HepG2 (cell line): ENCODE measurements at regions of chr16 and their contacts with region 1.

Region 1: GRCh38 chr16:11977376-11978041 is 975 bp downstream of the SNX29 start:
- DNase-seq: no peak
- ATAC-seq: peak; percentile 4
- H3K4me3 ChIP-seq: peak overlapping the region; percentile 75 to 91 (median 87)
- H3K27ac ChIP-seq: no peak overlapping the region
- H3K4me1 ChIP-seq: peaks cover 43% of the 10 kb centered on the region
- H3K27me3 ChIP-seq: no peaks in the 10 kb centered on the region; a peak in 1 of 5 replicates
- CTCF ChIP-seq: no peak
- EP300 ChIP-seq: no peak
- POLR2A ChIP-seq: no peak
- RAD21 ChIP-seq: no peak

Region 2: GRCh38 chr16:11915644-11916523 is 61.6 kb before region 1 on chr16 and contains the start of gene GSPT1:
- CTCF ChIA-PET with region 1: no interaction called
- POLR2A ChIA-PET with region 1: interaction called, 25 read pairs
- in situ Hi-C with region 1: no loop called
- intact Hi-C with region 1: loop called (anchors 10 kb)
- DNase-seq: peak; percentile 99
- ATAC-seq: peak; percentile 92
- H3K4me3 ChIP-seq: peak within 1 kb of the TSS; percentile 74 to 98 (median 97)
- H3K27ac ChIP-seq: peak within 1 kb of the TSS; percentile 94
- H3K4me1 ChIP-seq: peaks cover 48% of the 10 kb centered on the region
- H3K27me3 ChIP-seq: no peaks in the 10 kb centered on the region; a peak in 1 of 5 replicates
- CTCF ChIP-seq: peak; percentile 52
- EP300 ChIP-seq: peak; percentile 8 to 53; a peak in 1 of 4 replicates
- POLR2A ChIP-seq: peak; percentile 80 to 97
- RAD21 ChIP-seq: peak; percentile 52
- total RNA-seq, gene GSPT1: 316 and 449 TPM in 2 replicates

Region 3: GRCh38 chr16:11964761-11965551 is 12.6 kb before region 1 on chr16 and contains the start of gene TNFRSF17:
- CTCF ChIA-PET with region 1: no interaction called
- POLR2A ChIA-PET with region 1: interaction called, 17 read pairs
- in situ Hi-C with region 1: no loop called
- intact Hi-C with region 1: no loop called
- DNase-seq: no peak
- ATAC-seq: 0 out of 3 replicates have a peak, but pooled peaks have one; percentile 23
- H3K4me3 ChIP-seq: no peak within 1 kb of the TSS; a peak in 1 of 6 replicates
- H3K27ac ChIP-seq: no peak within 1 kb of the TSS
- H3K4me1 ChIP-seq: peaks cover 34% of the 10 kb centered on the region
- H3K27me3 ChIP-seq: peaks cover 4 to 19% of the 10 kb centered on the region in 2 experiments; a peak in 4 of 5 replicates
- CTCF ChIP-seq: no peak
- EP300 ChIP-seq: no peak
- POLR2A ChIP-seq: no peak
- RAD21 ChIP-seq: no peak
- total RNA-seq, gene TNFRSF17: not detected in 2 replicates

Region 4: DNA sequence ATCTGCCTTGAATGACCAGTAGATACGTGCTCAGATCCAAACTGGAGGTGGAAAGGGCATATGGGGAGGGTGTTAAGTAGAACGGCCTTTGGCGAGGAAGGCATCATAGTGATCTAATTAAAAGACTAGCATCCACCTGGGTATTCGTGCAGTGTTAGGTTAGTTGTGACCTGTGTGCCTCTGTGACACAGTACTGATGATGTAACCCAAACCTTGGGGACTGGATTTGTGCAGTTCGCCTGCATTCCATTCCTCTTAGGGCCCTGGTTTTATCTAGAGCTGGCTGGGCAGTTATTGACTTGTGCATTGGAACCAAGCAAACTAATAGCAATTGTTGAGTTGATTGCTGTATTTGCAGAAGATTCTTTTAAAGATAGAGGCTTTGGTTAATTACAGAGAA is 46.9 kb after region 1 on chr16:
- CTCF ChIA-PET with region 1: no interaction called
- POLR2A ChIA-PET with region 1: interaction called, 10 read pairs
- in situ Hi-C with region 1: no loop called
- intact Hi-C with region 1: no loop called
- DNase-seq: peak; percentile 86
- ATAC-seq: peak; percentile 97
- H3K4me3 ChIP-seq: no peak overlapping the region
- H3K27ac ChIP-seq: peak overlapping the region; percentile 3
- H3K4me1 ChIP-seq: peaks cover 21% of the 10 kb centered on the region
- H3K27me3 ChIP-seq: no peaks in the 10 kb centered on the region
- CTCF ChIP-seq: no peak
- EP300 ChIP-seq: no peak
- POLR2A ChIP-seq: no peak
- RAD21 ChIP-seq: no peak

Region 5: GRCh38 chr16:12062343-12063005 is 85.0 kb after region 1 on chr16:
- CTCF ChIA-PET with region 1: interaction called, 43 read pairs
- POLR2A ChIA-PET with region 1: interaction called, 8 read pairs
- in situ Hi-C with region 1: loop called (anchors 5 kb)
- intact Hi-C with region 1: no loop called
- DNase-seq: no peak
- ATAC-seq: no peak
- H3K4me3 ChIP-seq: no peak overlapping the region
- H3K27ac ChIP-seq: no peak overlapping the region
- H3K4me1 ChIP-seq: peaks cover 16% of the 10 kb centered on the region
- H3K27me3 ChIP-seq: no peaks in the 10 kb centered on the region
- CTCF ChIP-seq: no peak
- EP300 ChIP-seq: no peak
- POLR2A ChIP-seq: no peak
- RAD21 ChIP-seq: no peak

Region 6: GRCh38 chr16:13041646-13042290 is 1064.3 kb after region 1 on chr16:
- CTCF ChIA-PET with region 1: no interaction called
- POLR2A ChIA-PET with region 1: no interaction called
- in situ Hi-C with region 1: no loop called
- intact Hi-C with region 1: no loop called
- DNase-seq: no peak
- ATAC-seq: no peak
- H3K4me3 ChIP-seq: no peak overlapping the region
- H3K27ac ChIP-seq: no peak overlapping the region
- H3K4me1 ChIP-seq: no peaks in the 10 kb centered on the region
- H3K27me3 ChIP-seq: no peaks in the 10 kb centered on the region
- CTCF ChIP-seq: no peak
- EP300 ChIP-seq: no peak
- POLR2A ChIP-seq: no peak
- RAD21 ChIP-seq: no peak